Tibial artery (tissue), 4 donors: ENCODE measurements at regions of chr4 and their contacts with region 1.

Region 1: GRCh38 chr4:125928652-125929051 is 613.9 kb downstream of the FAT4 start:
- DNase-seq: no peak
- H3K4me3 ChIP-seq: no peak overlapping the region
- H3K27ac ChIP-seq: no peak overlapping the region
- H3K4me1 ChIP-seq: no peaks in the 10 kb centered on the region
- H3K27me3 ChIP-seq: no peaks in the 10 kb centered on the region
- CTCF ChIP-seq: no peak

Region 2: DNA sequence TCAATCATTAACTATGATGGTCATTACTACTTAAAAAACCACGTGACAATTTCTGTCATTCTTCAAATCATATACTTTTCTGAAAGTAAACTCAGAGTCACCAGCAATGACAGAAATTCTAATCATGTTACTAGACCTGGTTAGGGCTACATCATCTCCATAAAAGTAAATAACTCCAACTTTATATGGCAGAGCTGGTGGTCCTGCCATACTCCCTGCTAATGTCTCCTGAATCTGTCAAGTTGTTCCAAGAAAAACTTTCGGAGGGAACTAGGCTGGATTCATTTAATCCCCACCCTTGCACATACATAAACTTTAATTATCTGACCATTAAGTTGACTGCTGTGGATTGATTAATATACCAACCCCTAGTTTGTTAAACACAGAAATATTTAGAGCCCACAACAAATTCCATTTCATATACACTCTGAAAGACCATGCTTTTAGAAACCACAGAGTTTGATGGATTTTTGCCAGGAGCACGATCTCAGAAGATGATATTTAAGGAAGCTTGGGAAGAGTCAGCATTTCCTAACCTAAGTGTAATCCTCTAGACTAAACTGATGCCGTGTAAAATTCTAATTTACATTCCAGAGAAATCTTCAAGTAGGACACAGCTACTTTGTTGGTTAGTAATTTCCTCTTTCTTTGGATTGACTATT is 36.9 kb before region 1 on chr4:
- intact Hi-C with region 1: loop called (anchors 1 kb)
- DNase-seq: no peak
- H3K4me3 ChIP-seq: no peak overlapping the region
- H3K27ac ChIP-seq: no peak overlapping the region
- H3K4me1 ChIP-seq: no peaks in the 10 kb centered on the region
- H3K27me3 ChIP-seq: no peaks in the 10 kb centered on the region
- CTCF ChIP-seq: no peak

Region 3: DNA sequence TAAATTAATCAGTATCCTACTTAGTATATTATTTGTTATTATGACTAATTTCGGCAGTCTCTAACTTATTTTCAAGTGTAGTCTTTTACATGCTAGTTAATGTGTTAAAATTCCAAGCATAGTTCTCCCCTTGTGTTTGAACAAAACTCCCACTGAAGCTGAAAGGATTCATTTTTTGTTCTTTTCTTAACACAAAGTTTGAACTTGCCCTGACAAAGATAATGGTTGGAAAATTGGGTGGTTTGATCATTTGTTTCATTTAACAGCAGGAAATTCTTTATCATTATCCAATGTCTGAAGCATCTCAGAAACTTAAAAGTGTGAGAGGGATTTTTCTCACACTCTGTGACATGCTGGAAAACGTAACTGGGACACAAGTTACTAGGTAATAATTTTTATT is 1740.1 kb after region 1 on chr4:
- intact Hi-C with region 1: no loop called
- DNase-seq: no peak
- H3K4me3 ChIP-seq: no peak overlapping the region
- H3K27ac ChIP-seq: no peak overlapping the region
- H3K4me1 ChIP-seq: no peaks in the 10 kb centered on the region
- H3K27me3 ChIP-seq: no peaks in the 10 kb centered on the region
- CTCF ChIP-seq: no peak